Psoas muscle (tissue), 8 donors: ENCODE measurements at regions of chr10 and their contacts with region 1.

Region 1: GRCh38 chr10:30591249-30591670 is 38.3 kb downstream of the LYZL2 start:
- DNase-seq: no peak
- ATAC-seq: peak in 3 of 4 donors; percentile 56 to 71 (median 65)
- H3K4me3 ChIP-seq: no peak overlapping the region
- H3K27ac ChIP-seq: no peak overlapping the region
- H3K4me1 ChIP-seq: no peaks in the 10 kb centered on the region
- H3K27me3 ChIP-seq: no peaks in the 10 kb centered on the region
- CTCF ChIP-seq: peak; percentile 85

Region 2: DNA sequence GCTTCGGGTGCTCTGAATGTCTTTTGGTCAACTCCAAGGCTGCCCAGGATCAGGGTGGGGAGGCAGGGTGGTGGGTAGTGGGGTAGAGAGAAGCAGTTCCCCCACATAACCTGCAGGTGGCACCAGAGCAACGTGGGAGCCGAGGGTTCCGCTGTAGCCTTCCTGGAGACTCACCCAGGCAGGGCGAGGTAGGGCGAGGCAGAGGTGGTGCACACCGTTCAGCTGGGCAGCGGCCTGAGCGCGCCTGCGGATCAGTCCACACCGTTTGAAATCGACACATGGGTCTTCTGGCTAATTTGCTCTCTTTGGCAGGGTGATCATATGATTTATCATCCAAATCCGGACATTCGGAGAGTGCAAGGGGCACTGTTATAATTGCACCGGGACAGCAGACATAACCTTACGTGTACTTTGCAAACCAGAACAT is 198.7 kb before region 1 on chr10:
- intact Hi-C with region 1: loop called (anchors 1 to 2 kb)
- DNase-seq: peak; percentile 68 to 87
- ATAC-seq: peak; percentile 99 to 100 (median 100)
- H3K4me3 ChIP-seq: peak overlapping the region; percentile 40
- H3K27ac ChIP-seq: no peak overlapping the region
- H3K4me1 ChIP-seq: peaks cover 4% of the 10 kb centered on the region
- H3K27me3 ChIP-seq: no peaks in the 10 kb centered on the region
- CTCF ChIP-seq: peak; percentile 95

Region 3: DNA sequence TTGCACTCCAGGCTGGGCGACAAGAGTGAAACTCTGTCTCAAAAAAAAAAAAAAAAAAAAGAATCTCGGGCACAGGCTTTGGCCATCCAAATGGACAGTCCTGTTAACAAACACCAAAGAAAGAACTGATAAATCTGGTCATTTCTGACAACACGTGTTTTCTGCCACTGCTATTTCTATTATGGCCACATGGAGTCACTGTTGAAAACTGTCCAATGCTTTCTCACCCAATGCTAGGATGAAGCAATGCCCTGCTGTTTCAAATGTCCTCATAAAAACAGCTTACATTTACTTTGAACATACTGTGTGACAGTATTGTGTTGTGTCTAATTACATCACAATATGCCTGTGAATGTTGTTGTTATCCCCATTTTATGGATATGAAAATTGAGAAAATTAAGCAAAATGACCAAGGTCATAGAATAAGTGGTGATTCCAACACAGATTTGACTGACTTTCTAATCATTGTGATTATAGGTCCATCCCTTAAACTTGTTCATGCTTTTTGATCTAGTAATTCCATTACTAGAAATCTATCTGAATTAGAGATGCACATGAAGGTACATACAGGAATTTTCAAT is 177.2 kb before region 1 on chr10:
- intact Hi-C with region 1: loop called in 1 of 2 experiments (anchors 5 kb)
- DNase-seq: no peak
- ATAC-seq: peak; percentile 73 to 96 (median 84)
- H3K4me3 ChIP-seq: no peak overlapping the region
- H3K27ac ChIP-seq: no peak overlapping the region
- H3K4me1 ChIP-seq: peaks cover 4% of the 10 kb centered on the region
- H3K27me3 ChIP-seq: no peaks in the 10 kb centered on the region
- CTCF ChIP-seq: peak; percentile 86

Region 4: DNA sequence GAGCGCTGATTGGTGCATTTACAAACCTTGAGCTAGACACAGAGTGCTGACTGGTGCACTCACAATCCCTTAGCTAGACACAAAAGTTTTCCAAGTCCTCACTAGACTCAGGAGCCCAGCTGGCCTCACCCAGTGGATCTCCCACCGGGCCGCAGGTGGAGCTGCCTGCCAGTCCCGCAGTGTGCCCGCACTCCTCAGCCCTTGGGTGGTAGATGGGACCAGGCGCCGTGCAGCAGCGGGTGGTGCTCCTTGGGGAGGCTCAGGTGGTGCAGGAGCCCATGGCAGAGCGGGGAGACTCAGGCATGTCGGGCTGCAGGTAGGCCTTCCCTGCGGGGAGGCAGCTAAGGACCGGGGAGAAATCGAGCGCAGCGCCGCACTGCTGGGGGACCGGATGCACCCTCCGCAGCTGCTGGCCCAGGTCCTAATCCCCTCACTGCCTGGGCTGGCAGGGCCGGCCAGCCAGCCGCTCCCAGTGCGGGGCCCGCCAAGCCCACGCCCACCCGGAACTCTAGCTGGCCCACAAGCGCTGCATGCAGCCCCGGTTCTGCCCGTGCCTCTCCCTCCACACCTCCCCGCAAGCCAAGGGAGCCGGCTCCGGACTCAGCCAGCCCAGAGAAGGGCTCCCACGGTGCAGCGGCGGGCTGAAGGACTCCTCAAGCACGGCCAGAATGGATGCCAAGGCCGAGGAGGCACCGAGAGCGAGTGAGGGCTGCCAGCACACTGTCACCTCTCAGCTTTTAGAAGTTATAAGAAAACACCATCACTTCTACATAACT is 311.5 kb after region 1 on chr10:
- intact Hi-C with region 1: no loop called
- DNase-seq: peak; percentile 47 to 67
- ATAC-seq: peak in 2 of 4 donors; percentile 8 to 19
- H3K4me3 ChIP-seq: no peak overlapping the region
- H3K27ac ChIP-seq: no peak overlapping the region
- H3K4me1 ChIP-seq: no peaks in the 10 kb centered on the region
- H3K27me3 ChIP-seq: no peaks in the 10 kb centered on the region
- CTCF ChIP-seq: no peak